ENCODE measurements at regions of chr12 and their contacts with region 1.

Region 1: GRCh38 chr12:6632026-6632983 is 3.5 kb downstream of the LPAR5 start:
- DNase-seq: peak; percentile 78
- ATAC-seq: peak; percentile 57
- H3K4me3 Mint-ChIP-seq: peak overlapping the region; percentile 78
- H3K27ac Mint-ChIP-seq: peak overlapping the region; percentile 100
- H3K4me1 Mint-ChIP-seq: peaks cover 64% of the 10 kb centered on the region
- H3K27me3 Mint-ChIP-seq: no peaks in the 10 kb centered on the region
- CTCF ChIP-seq: no peak

Region 2: GRCh38 chr12:5780536-5780935 is 851.8 kb before region 1 on chr12:
- CTCF ChIA-PET with region 1: no interaction called
- POLR2A ChIA-PET with region 1: no interaction called
- intact Hi-C with region 1: no loop called
- DNase-seq: no peak
- ATAC-seq: no peak
- H3K4me3 Mint-ChIP-seq: no peak overlapping the region
- H3K27ac Mint-ChIP-seq: no peak overlapping the region
- H3K4me1 Mint-ChIP-seq: no peaks in the 10 kb centered on the region
- H3K27me3 Mint-ChIP-seq: peaks cover 3% of the 10 kb centered on the region
- CTCF ChIP-seq: no peak

Region 3: GRCh38 chr12:6613776-6614512 is 18.4 kb before region 1 on chr12:
- CTCF ChIA-PET with region 1: interaction called, 41 read pairs
- POLR2A ChIA-PET with region 1: interaction called, 10 read pairs
- intact Hi-C with region 1: no loop called
- DNase-seq: peak; percentile 63
- ATAC-seq: peak; percentile 38
- H3K4me3 Mint-ChIP-seq: no peak overlapping the region
- H3K27ac Mint-ChIP-seq: peak overlapping the region; percentile 68
- H3K4me1 Mint-ChIP-seq: peaks cover 46% of the 10 kb centered on the region
- H3K27me3 Mint-ChIP-seq: no peaks in the 10 kb centered on the region
- CTCF ChIP-seq: no peak

Region 4: GRCh38 chr12:6620137-6620884 is 12.0 kb before region 1 on chr12:
- CTCF ChIA-PET with region 1: interaction called, 41 read pairs
- POLR2A ChIA-PET with region 1: interaction called, 18 read pairs
- intact Hi-C with region 1: no loop called
- DNase-seq: peak; percentile 65
- ATAC-seq: peak; percentile 78
- H3K4me3 Mint-ChIP-seq: peak overlapping the region; percentile 72
- H3K27ac Mint-ChIP-seq: peak overlapping the region; percentile 69
- H3K4me1 Mint-ChIP-seq: peaks cover 8% of the 10 kb centered on the region
- H3K27me3 Mint-ChIP-seq: no peaks in the 10 kb centered on the region
- CTCF ChIP-seq: peak; percentile 77

Region 5: DNA sequence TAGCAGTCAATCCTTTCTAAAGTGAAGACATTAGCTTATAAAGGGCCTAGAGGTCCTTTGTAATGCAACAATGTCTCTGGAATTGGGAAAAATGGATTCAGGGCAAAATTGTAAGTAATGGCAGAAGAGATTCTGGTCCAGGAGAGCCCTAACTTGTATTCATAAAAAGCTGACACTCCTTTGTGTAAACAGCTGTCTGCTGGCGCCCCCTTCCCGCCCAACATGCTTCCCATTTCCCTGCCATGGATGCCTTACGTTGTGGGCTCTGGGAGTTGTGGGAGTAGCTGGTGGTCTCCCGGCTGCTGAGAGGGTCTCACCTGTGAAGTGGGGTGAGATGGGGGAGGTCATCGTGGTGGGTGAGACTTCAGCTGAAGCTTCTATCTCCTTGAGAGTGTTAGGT is 12.6 kb after region 1 on chr12:
- CTCF ChIA-PET with region 1: interaction called, 8 read pairs
- POLR2A ChIA-PET with region 1: interaction called, 15 read pairs
- intact Hi-C with region 1: no loop called
- DNase-seq: no peak
- ATAC-seq: no peak
- H3K4me3 Mint-ChIP-seq: no peak overlapping the region
- H3K27ac Mint-ChIP-seq: no peak overlapping the region
- H3K4me1 Mint-ChIP-seq: peaks cover 10% of the 10 kb centered on the region
- H3K27me3 Mint-ChIP-seq: no peaks in the 10 kb centered on the region
- CTCF ChIP-seq: no peak

Measured in activated CD8-positive, alpha-beta T cell treated with anti-CD3 and anti-CD28 coated beads for 36 hours (primary cell).